ENCODE measurements at regions of chr17 and their contacts with region 1.

Region 1: DNA sequence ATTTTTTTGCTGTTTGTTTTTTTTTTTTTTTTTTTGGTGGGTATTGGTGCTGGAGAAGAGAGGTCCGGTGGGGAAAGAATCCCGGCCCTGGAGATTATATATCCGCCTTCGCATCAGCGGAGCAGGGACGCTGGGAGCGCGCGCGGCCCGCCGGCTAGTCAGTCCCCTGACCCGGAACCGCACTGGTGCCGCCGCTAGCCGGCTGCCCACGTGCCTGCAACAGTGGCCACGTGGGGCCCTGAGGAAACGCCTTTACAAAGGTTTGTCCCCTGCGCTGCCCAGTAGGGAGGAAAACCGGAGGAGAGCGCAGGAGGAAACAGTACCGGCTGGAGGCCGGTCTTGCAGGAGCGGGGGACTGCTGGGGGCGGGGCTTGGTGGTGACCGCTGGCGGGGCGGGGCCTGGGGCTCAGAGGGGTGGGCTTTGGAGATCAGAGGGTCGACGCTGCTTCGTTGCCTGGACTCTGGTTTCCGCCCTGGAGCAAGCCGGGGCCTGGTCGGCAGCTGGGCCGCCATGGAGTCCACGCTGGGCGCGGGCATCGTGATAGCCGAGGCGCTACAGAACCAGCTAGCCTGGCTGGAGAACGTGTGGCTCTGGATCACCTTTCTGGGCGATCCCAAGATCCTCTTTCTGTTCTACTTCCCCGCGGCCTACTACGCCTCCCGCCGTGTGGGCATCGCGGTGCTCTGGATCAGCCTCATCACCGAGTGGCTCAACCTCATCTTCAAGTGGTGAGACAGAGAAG is at the start of gene G6PC3:
- DNase-seq: peak; percentile 98
- H3K4me3 ChIP-seq: peak within 1 kb of the TSS; percentile 42 to 81 (median 43)
- H3K27ac ChIP-seq: peak within 1 kb of the TSS; percentile 54
- H3K4me1 ChIP-seq: peaks cover 20% of the 10 kb centered on the region
- H3K27me3 ChIP-seq: no peaks in the 10 kb centered on the region
- CTCF ChIP-seq: no peak
- POLR2A ChIP-seq: peak; percentile 96
- total RNA-seq, gene G6PC3: 74.1 and 78.4 TPM in 2 replicates

Region 2: DNA sequence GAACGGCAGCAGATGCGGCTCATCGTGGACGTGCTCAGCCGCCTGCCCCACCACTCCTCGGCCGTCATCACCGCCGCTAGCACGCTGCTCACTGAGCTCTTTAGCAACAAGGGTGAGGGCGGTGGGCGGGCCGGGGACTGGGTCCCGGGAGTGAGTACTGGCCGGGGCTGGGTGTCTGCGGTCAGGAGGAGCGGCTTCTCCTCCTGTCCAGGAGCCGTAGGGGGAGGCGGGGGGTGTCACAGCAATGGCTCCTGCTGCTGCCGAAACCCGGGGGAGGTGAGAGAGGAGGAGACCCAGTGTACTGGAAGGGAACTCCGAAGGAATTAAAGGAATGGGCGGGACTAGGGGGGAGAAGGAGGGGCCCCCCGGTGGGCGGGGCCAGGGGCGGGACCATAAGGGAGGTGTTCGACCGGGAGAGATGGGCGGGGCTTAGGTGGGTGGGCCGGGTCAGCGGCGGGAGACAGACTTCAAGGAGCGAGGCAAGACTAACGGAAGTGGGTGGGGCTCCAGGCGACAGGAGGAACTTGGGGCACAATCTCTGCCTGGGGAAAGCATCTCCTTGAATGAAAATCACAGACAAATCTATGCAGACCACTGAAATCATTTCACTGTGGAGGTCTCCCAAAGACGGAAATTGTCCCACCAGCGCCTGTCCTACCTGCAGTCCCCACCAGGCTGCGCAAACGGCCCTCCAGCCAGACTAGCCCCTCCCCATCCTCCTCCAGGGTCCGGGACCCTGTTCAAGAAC is 63.9 kb before region 1 on chr17:
- CTCF ChIA-PET with region 1: no interaction called
- POLR2A ChIA-PET with region 1: interaction called, 4 read pairs
- dilution Hi-C with region 1: no loop called
- intact Hi-C with region 1: loop called (anchors 2 kb)
- DNase-seq: peak; percentile 93
- H3K4me3 ChIP-seq: peak overlapping the region in 2 of 3 experiments; percentile 43 to 56
- H3K27ac ChIP-seq: no peak overlapping the region
- H3K4me1 ChIP-seq: peaks cover 36% of the 10 kb centered on the region
- H3K27me3 ChIP-seq: no peaks in the 10 kb centered on the region
- CTCF ChIP-seq: peak; percentile 57 to 76
- POLR2A ChIP-seq: no peak

Region 3: GRCh38 chr17:44014437-44015172 is 56.0 kb before region 1 on chr17 and contains the start of gene TMEM101:
- CTCF ChIA-PET with region 1: no interaction called
- POLR2A ChIA-PET with region 1: no interaction called
- dilution Hi-C with region 1: no loop called
- intact Hi-C with region 1: loop called (anchors 2 kb)
- DNase-seq: peak; percentile 83
- H3K4me3 ChIP-seq: peak within 1 kb of the TSS; percentile 29 to 68 (median 67)
- H3K27ac ChIP-seq: no peak within 1 kb of the TSS
- H3K4me1 ChIP-seq: peaks cover 5% of the 10 kb centered on the region
- H3K27me3 ChIP-seq: no peaks in the 10 kb centered on the region
- CTCF ChIP-seq: no peak
- POLR2A ChIP-seq: peak; percentile 85
- total RNA-seq, gene TMEM101: 29.4 and 30.4 TPM in 2 replicates

Region 4: GRCh38 chr17:44095642-44096496 is 25.2 kb after region 1 on chr17:
- CTCF ChIA-PET with region 1: interaction called, 3 read pairs
- POLR2A ChIA-PET with region 1: no interaction called
- dilution Hi-C with region 1: no loop called
- intact Hi-C with region 1: loop called (anchors 1 kb)
- DNase-seq: peak; percentile 97
- H3K4me3 ChIP-seq: peak overlapping the region in 2 of 3 experiments; percentile 10 to 19
- H3K27ac ChIP-seq: peak overlapping the region; percentile 83
- H3K4me1 ChIP-seq: peaks cover 23% of the 10 kb centered on the region
- H3K27me3 ChIP-seq: no peaks in the 10 kb centered on the region
- CTCF ChIP-seq: no peak
- POLR2A ChIP-seq: peak; percentile 92

Region 5: GRCh38 chr17:44123356-44124117 is 52.9 kb after region 1 on chr17 and contains the start of gene HDAC5:
- CTCF ChIA-PET with region 1: interaction called, 12 read pairs
- POLR2A ChIA-PET with region 1: interaction called, 4 read pairs
- dilution Hi-C with region 1: no loop called
- intact Hi-C with region 1: loop called (anchors 1 kb)
- DNase-seq: peak; percentile 95
- H3K4me3 ChIP-seq: peak within 1 kb of the TSS; percentile 58 to 80 (median 78)
- H3K27ac ChIP-seq: peak within 1 kb of the TSS; percentile 51
- H3K4me1 ChIP-seq: peaks cover 7% of the 10 kb centered on the region
- H3K27me3 ChIP-seq: peaks cover 2 to 7% of the 10 kb centered on the region in 2 experiments
- CTCF ChIP-seq: peak; percentile 51 to 63
- POLR2A ChIP-seq: no peak
- total RNA-seq, gene HDAC5: 40.2 and 40.4 TPM in 2 replicates

Region 6: GRCh38 chr17:44141717-44142285 is 71.2 kb after region 1 on chr17 and contains the start of gene HROB:
- CTCF ChIA-PET with region 1: no interaction called
- POLR2A ChIA-PET with region 1: no interaction called
- dilution Hi-C with region 1: no loop called
- intact Hi-C with region 1: loop called (anchors 2 kb)
- DNase-seq: peak; percentile 94
- H3K4me3 ChIP-seq: peak within 1 kb of the TSS; percentile 81 to 98 (median 88)
- H3K27ac ChIP-seq: peak within 1 kb of the TSS; percentile 93
- H3K4me1 ChIP-seq: peaks cover 20% of the 10 kb centered on the region
- H3K27me3 ChIP-seq: no peaks in the 10 kb centered on the region
- CTCF ChIP-seq: peak; percentile 87 to 97
- POLR2A ChIP-seq: no peak
- total RNA-seq, gene HROB: 9.0 and 10.1 TPM in 2 replicates

Region 7: GRCh38 chr17:44186307-44187130 is 115.9 kb after region 1 on chr17 and contains the start of gene TMUB2:
- CTCF ChIA-PET with region 1: no interaction called
- POLR2A ChIA-PET with region 1: no interaction called
- dilution Hi-C with region 1: no loop called
- intact Hi-C with region 1: loop called (anchors 5 kb)
- DNase-seq: peak; percentile 100
- H3K4me3 ChIP-seq: peak within 1 kb of the TSS; percentile 82 to 96 (median 94)
- H3K27ac ChIP-seq: peak within 1 kb of the TSS; percentile 92
- H3K4me1 ChIP-seq: peaks cover 13% of the 10 kb centered on the region
- H3K27me3 ChIP-seq: no peaks in the 10 kb centered on the region
- CTCF ChIP-seq: no peak
- POLR2A ChIP-seq: peak; percentile 92
- total RNA-seq, gene TMUB2: 39.5 and 43.6 TPM in 2 replicates